ENCODE measurements at regions of chr9 and their contacts with region 1.

Region 1: DNA sequence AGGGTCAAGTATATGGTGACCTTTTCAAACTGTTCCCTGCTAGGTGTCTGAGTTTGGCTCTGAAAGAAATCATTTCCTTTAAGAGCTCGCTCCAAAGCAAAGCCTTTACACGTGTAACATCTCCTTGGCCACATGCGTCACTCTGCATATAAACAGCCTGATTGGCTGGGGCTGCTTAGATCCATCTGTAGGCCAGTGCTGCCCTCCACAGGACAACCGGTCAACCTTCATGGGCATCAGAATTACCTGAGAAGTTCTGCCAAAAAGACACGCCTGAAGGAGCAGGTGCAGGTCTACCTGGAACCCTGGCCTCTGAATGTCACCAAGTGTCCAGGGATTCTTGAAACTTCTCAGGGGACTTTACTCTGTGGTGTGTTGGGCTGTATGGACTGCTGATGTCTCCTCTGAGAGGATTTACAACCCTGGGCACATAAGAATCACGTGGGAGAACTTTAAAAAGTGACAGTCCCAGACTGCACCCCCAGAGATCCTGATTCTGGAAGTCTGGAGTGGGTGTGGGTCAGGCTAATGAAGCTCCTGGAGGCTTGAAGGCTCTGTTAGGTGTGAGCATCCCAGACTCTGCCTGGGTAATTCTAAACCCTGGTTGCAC is 497.6 kb downstream of the GADD45G start:
- DNase-seq: peak; percentile 56
- ATAC-seq: peak; percentile 100
- H3K4me3 Mint-ChIP-seq: no peak overlapping the region
- H3K27ac Mint-ChIP-seq: no peak overlapping the region
- H3K4me1 Mint-ChIP-seq: peaks cover 6% of the 10 kb centered on the region
- H3K27me3 Mint-ChIP-seq: no peaks in the 10 kb centered on the region
- CTCF ChIP-seq: peak; percentile 73

Region 2: DNA sequence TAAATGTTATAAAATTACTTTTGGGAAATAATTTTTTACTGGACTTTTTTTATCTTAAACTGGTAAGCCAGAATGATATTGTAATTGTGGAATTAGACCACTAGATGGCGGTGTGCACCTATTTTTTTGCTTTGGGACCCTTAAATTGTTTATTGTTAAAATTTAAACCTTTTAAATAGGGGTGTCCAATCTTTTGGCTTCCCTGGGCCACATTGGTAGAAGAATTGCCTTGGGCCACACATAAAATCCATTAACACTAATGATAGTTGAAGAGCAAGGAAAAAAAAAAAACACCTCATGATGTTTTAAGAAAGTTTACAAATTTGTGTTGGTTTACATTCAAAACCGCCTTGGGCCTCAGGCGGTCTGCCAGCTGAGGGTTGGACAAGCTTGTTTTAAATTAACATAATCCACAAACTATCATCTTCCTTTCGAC is 526.0 kb before region 1 on chr9:
- CTCF ChIA-PET with region 1: interaction called, 6 read pairs
- POLR2A ChIA-PET with region 1: no interaction called
- intact Hi-C with region 1: loop called (anchors 1 kb)
- DNase-seq: no peak
- ATAC-seq: no peak
- H3K4me3 Mint-ChIP-seq: no peak overlapping the region
- H3K27ac Mint-ChIP-seq: no peak overlapping the region
- H3K4me1 Mint-ChIP-seq: no peaks in the 10 kb centered on the region
- H3K27me3 Mint-ChIP-seq: peaks cover 32% of the 10 kb centered on the region
- CTCF ChIP-seq: peak; percentile 54

Region 3: DNA sequence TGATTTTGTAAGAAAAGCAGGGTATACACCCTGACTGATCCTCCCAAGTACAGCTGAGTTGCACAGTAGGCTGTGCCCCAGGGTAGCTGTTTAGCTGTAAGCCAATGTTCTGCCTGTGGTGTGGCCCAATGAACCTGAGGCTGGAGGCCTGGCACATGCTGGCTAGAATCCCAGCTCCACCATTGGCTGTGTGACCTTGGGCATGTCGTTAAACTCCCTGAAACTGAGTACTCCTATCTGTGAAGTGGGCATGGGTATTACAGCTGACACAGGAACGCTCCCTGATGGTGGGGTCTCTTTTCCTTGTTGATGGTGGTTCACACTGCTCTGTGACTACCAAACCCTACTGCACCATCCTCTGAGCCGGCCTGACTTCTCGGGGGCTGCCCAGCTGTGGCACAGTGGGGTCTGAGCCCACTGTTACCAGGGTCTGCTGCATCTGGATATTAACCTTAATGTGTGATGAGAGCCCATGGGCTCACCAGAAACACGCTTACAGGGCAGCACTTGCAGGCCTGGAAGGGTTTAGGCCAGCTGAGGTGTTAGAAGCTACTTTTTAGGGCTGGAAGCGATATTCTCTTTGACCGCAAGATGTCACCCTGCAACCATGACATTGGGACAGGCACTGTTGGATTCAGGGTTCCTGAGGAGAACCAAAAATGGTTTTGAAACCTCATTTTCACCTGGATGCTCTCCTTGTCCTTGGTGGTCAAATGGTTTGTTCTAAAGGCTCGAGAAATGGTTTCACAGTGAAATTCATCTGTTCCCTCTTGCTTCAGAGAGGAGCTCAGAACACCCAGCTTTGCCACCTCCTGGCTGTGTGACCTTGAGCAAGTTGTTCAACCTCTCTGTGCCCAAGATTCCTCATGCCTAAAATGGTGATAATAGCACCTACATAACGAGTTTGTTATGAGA is 504.4 kb before region 1 on chr9:
- CTCF ChIA-PET with region 1: interaction called, 166 read pairs
- POLR2A ChIA-PET with region 1: interaction called, 7 read pairs
- intact Hi-C with region 1: loop called (anchors 1 kb)
- DNase-seq: no peak
- ATAC-seq: peak; percentile 43
- H3K4me3 Mint-ChIP-seq: no peak overlapping the region
- H3K27ac Mint-ChIP-seq: no peak overlapping the region
- H3K4me1 Mint-ChIP-seq: peaks cover 1% of the 10 kb centered on the region
- H3K27me3 Mint-ChIP-seq: peaks cover 8% of the 10 kb centered on the region
- CTCF ChIP-seq: peak; percentile 23

Region 4: GRCh38 chr9:89919169-89919681 is 183.2 kb before region 1 on chr9:
- CTCF ChIA-PET with region 1: interaction called, 3 read pairs
- POLR2A ChIA-PET with region 1: no interaction called
- intact Hi-C with region 1: loop called (anchors 1 kb)
- DNase-seq: no peak
- ATAC-seq: peak; percentile 82
- H3K4me3 Mint-ChIP-seq: no peak overlapping the region
- H3K27ac Mint-ChIP-seq: no peak overlapping the region
- H3K4me1 Mint-ChIP-seq: peaks cover 8% of the 10 kb centered on the region
- H3K27me3 Mint-ChIP-seq: peaks cover 3% of the 10 kb centered on the region
- CTCF ChIP-seq: no peak

Region 5: GRCh38 chr9:90086101-90086511 is 16.3 kb before region 1 on chr9:
- CTCF ChIA-PET with region 1: no interaction called
- POLR2A ChIA-PET with region 1: no interaction called
- intact Hi-C with region 1: no loop called
- DNase-seq: no peak
- ATAC-seq: no peak
- H3K4me3 Mint-ChIP-seq: no peak overlapping the region
- H3K27ac Mint-ChIP-seq: no peak overlapping the region
- H3K4me1 Mint-ChIP-seq: peaks cover 11% of the 10 kb centered on the region
- H3K27me3 Mint-ChIP-seq: peaks cover 2% of the 10 kb centered on the region
- CTCF ChIP-seq: no peak

Measured in activated B cell treated with CpG ODN at 0.5 μM for 24 hours (primary cell).